Mammary epithelial cell (primary cell): ENCODE measurements at regions of chr9 and their contacts with region 1.

Region 1: DNA sequence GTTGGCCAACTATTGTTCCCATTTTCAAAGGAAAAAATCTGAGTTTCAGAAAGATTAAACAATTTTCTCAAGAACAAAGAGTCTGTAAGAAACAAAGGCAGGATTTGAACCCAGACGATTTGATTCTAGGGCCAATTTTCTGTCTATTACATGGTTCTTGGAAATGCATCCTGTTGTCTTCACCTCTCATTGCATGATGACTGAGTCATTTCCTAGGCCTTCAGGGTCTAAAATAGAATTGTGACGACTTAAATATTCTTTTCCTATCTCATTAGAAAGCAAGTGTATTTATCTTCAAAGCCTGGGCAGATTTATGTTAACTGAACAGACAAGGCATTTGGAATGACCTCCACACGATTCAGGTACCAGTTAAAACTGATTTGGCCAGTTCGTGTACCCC is 512.9 kb downstream of the NTRK2 start:
- DNase-seq: peak; percentile 26
- H3K4me3 ChIP-seq: no peak overlapping the region
- H3K27ac ChIP-seq: no peak overlapping the region
- H3K4me1 ChIP-seq: peaks cover 9% of the 10 kb centered on the region
- H3K27me3 ChIP-seq: no peaks in the 10 kb centered on the region
- CTCF ChIP-seq: no peak

Region 2: GRCh38 chr9:85224729-85225128 is 42.3 kb after region 1 on chr9:
- CTCF ChIA-PET with region 1: no interaction called
- dilution Hi-C with region 1: no loop called
- in situ Hi-C with region 1: no loop called
- intact Hi-C with region 1: loop called (anchors 2 kb)
- DNase-seq: peak; percentile 85
- H3K4me3 ChIP-seq: no peak overlapping the region
- H3K27ac ChIP-seq: peak overlapping the region; percentile 53
- H3K4me1 ChIP-seq: peaks cover 30% of the 10 kb centered on the region
- H3K27me3 ChIP-seq: no peaks in the 10 kb centered on the region
- CTCF ChIP-seq: no peak

Region 3: GRCh38 chr9:85453850-85454249 is 271.5 kb after region 1 on chr9:
- CTCF ChIA-PET with region 1: no interaction called
- dilution Hi-C with region 1: no loop called
- in situ Hi-C with region 1: no loop called
- intact Hi-C with region 1: no loop called
- DNase-seq: no peak
- H3K4me3 ChIP-seq: no peak overlapping the region
- H3K27ac ChIP-seq: no peak overlapping the region
- H3K4me1 ChIP-seq: no peaks in the 10 kb centered on the region
- H3K27me3 ChIP-seq: no peaks in the 10 kb centered on the region
- CTCF ChIP-seq: no peak